Dendritic cell treated with granulocyte-macrophage colony-stimulating factor and Interleukin-4, amounts not matched to agents 40 ng/mL and 50 ng/mL, for 4 days (primary cell): ENCODE measurements at regions of chr17 and their contacts with region 1.

Region 1: GRCh38 chr17:65561394-65562205 is at the start of gene AXIN2:
- H3K4me3 Mint-ChIP-seq: peak within 1 kb of the TSS; percentile 74
- H3K27ac Mint-ChIP-seq: peak within 1 kb of the TSS; percentile 15
- H3K4me1 Mint-ChIP-seq: peaks cover 13% of the 10 kb centered on the region
- H3K27me3 Mint-ChIP-seq: peaks cover 47% of the 10 kb centered on the region

Region 2: DNA sequence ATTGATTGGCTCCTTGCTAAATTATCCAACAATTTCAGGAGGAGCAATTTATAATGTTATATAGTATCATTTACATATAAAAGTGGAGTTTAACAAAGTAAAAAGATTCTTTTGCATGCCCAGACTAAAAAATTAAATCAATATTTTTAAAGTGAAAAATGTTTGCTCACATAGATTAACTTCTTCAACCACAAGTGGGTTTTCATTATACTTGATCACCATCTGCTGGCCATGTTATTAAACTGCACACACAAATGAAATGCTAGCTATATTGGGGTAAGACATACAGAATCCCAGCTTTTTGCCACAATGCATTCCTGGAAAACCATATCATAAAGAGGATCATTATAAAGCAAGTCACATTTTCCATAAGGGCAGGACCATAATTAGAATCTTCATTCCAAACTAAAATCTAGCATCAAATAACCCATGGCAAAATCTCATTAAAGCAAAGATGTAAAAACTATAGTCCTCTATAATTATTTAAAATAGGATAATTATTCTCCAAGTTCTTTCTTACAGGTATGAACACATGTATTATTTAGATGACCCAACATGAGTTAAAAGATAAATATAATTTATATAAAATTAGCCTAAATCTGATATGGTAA is 604.0 kb after region 1 on chr17:
- intact Hi-C with region 1: loop called (anchors 5 kb)
- H3K4me3 Mint-ChIP-seq: no peak overlapping the region
- H3K27ac Mint-ChIP-seq: no peak overlapping the region
- H3K4me1 Mint-ChIP-seq: no peaks in the 10 kb centered on the region
- H3K27me3 Mint-ChIP-seq: no peaks in the 10 kb centered on the region